Activated naive CD4-positive, alpha-beta T cell treated with anti-CD3 and anti-CD28 coated beads for 36 hours (primary cell): ENCODE measurements at regions of chr1 and their contacts with region 1.

Region 1: DNA sequence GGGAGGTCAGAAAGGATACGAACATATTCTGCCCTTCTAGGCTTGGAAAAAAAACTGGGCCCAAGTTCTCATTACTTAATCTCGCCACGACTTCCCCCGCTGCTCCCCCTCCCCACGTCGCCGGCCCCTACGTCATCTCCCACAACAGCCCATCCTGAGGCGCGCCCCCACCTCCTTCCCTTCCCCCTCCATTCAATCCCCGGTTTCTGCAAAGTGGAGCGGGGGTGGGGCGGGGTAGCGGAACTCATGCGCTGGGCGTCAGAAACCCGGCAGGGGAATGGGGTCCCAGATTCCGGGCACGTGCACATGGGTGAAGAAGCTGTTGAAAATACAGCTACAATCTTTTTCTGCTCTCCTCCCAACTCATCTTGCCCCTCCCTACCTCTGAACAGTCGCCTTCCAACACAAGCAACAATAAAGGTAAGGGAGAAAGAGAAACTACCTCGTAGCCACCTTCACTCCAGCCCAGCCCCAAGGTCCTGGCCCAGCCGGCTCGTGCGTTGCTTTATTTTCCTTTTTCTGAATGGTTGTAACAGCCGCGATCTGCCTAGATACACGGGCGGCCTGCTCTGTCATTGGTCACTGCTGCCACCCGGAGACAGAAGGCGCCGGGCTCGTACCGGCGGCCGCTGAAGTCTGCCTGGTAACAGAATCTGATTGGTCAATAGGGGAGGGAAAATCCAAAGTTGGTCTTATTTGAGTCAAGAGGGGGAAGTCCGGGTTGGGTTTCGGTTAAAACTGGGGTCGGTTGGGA is at the start of gene RFX5:
- DNase-seq: peak; percentile 97
- H3K4me3 Mint-ChIP-seq: peak within 1 kb of the TSS; percentile 93
- H3K27ac Mint-ChIP-seq: peak within 1 kb of the TSS; percentile 96
- H3K4me1 Mint-ChIP-seq: peaks cover 33% of the 10 kb centered on the region
- H3K27me3 Mint-ChIP-seq: no peaks in the 10 kb centered on the region
- total RNA-seq, gene RFX5: 62.3 to 63.4 TPM

Region 2: GRCh38 chr1:150944856-150945255 is 402.1 kb before region 1 on chr1:
- CTCF ChIA-PET with region 1: no interaction called
- intact Hi-C with region 1: no loop called
- DNase-seq: no peak
- H3K4me3 Mint-ChIP-seq: no peak overlapping the region
- H3K27ac Mint-ChIP-seq: no peak overlapping the region
- H3K4me1 Mint-ChIP-seq: no peaks in the 10 kb centered on the region
- H3K27me3 Mint-ChIP-seq: no peaks in the 10 kb centered on the region

Region 3: GRCh38 chr1:151254217-151255213 is 92.4 kb before region 1 on chr1 and contains the start of gene PSMD4:
- CTCF ChIA-PET with region 1: no interaction called
- intact Hi-C with region 1: loop called (anchors 1 kb)
- DNase-seq: peak; percentile 97
- H3K4me3 Mint-ChIP-seq: peak within 1 kb of the TSS; percentile 95
- H3K27ac Mint-ChIP-seq: peak within 1 kb of the TSS; percentile 92
- H3K4me1 Mint-ChIP-seq: peaks cover 31% of the 10 kb centered on the region
- H3K27me3 Mint-ChIP-seq: peaks cover 2% of the 10 kb centered on the region
- total RNA-seq, gene PSMD4: 167 to 192 TPM

Region 4: GRCh38 chr1:151311589-151312331 is 35.2 kb before region 1 on chr1:
- CTCF ChIA-PET with region 1: interaction called, 3 read pairs
- intact Hi-C with region 1: loop called (anchors 1 kb)
- DNase-seq: peak; percentile 94
- H3K4me3 Mint-ChIP-seq: no peak overlapping the region
- H3K27ac Mint-ChIP-seq: peak overlapping the region; percentile 92
- H3K4me1 Mint-ChIP-seq: peaks cover 37% of the 10 kb centered on the region
- H3K27me3 Mint-ChIP-seq: no peaks in the 10 kb centered on the region

Region 5: GRCh38 chr1:151399890-151400495 is 53.0 kb after region 1 on chr1:
- CTCF ChIA-PET with region 1: interaction called, 4 read pairs
- intact Hi-C with region 1: loop called (anchors 1 kb)
- DNase-seq: peak; percentile 40
- H3K4me3 Mint-ChIP-seq: peak overlapping the region; percentile 84
- H3K27ac Mint-ChIP-seq: peak overlapping the region; percentile 94
- H3K4me1 Mint-ChIP-seq: peaks cover 26% of the 10 kb centered on the region
- H3K27me3 Mint-ChIP-seq: no peaks in the 10 kb centered on the region

Region 6: DNA sequence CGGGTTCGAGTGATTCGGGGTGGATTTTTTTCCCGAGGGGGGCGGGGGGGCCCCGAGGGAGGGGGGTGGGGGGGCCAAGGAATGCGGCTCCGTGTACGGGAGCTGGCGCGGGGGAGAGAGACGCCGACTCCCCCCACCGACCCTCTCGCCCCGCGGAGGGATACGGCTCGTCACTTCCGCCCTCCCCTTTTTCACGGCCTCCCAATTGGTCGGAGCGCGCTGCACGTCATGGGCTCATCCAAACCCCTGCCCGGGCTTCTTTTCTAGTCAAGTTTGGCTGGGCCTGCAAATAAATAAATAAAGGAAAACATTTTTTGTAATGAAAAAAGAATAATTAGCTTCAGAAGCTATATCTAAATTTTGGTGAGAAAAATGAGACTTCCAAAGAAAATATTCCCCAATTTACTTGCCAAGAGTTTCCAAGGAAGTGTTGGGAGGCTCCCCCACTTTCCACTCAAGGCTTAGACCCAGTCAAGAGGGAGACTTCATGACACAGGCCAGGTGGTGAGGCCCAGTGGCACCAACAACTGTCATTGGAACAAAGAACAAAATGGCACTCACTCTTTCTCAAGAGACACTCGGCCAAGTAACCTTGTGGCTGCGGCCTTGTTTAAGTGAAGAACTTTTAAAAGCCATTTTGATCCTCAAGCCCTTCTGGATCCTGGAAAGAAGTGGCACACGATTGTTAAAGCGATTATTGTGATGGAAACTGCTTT is 112.5 kb after region 1 on chr1 and contains the start of gene POGZ:
- CTCF ChIA-PET with region 1: no interaction called
- intact Hi-C with region 1: loop called (anchors 1 kb)
- DNase-seq: peak; percentile 97
- H3K4me3 Mint-ChIP-seq: peak within 1 kb of the TSS; percentile 78
- H3K27ac Mint-ChIP-seq: peak within 1 kb of the TSS; percentile 86
- H3K4me1 Mint-ChIP-seq: peaks cover 29% of the 10 kb centered on the region
- H3K27me3 Mint-ChIP-seq: peaks cover 11% of the 10 kb centered on the region
- total RNA-seq, gene POGZ: 69.7 to 73.7 TPM